Activated naive CD4-positive, alpha-beta T cell treated with anti-CD3 and anti-CD28 coated beads for 36 hours (primary cell): ENCODE measurements at regions of chr12 and their contacts with region 1.

Region 1: GRCh38 chr12:111396726-111397445 is 8.8 kb upstream of the SH2B3 start:
- DNase-seq: peak; percentile 88
- H3K4me3 Mint-ChIP-seq: peak overlapping the region; percentile 65
- H3K27ac Mint-ChIP-seq: no peak overlapping the region
- H3K4me1 Mint-ChIP-seq: peaks cover 36% of the 10 kb centered on the region
- H3K27me3 Mint-ChIP-seq: no peaks in the 10 kb centered on the region

Region 2: DNA sequence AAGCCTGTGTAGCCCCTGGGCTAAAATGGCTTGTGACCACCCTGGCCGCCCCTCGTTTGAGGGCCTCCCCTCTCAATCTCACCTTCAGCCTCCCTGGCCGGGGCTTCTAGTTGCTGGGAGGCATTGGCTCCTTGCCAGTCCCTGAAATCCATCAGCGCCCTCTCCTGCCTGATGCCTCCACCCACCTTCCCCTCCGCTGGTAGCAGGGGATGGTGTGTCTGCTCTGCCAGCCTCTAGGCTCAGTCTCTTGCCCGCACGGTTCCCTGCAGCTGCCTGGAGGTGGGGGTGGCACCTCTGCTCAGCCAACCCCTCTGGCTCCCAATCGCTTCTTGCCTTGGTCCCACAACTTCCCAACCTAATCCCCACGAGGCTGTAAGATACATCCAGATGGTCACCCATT is 195.8 kb before region 1 on chr12:
- CTCF ChIA-PET with region 1: no interaction called
- intact Hi-C with region 1: no loop called
- DNase-seq: no peak
- H3K4me3 Mint-ChIP-seq: no peak overlapping the region
- H3K27ac Mint-ChIP-seq: no peak overlapping the region
- H3K4me1 Mint-ChIP-seq: no peaks in the 10 kb centered on the region
- H3K27me3 Mint-ChIP-seq: peaks cover 13% of the 10 kb centered on the region

Region 3: DNA sequence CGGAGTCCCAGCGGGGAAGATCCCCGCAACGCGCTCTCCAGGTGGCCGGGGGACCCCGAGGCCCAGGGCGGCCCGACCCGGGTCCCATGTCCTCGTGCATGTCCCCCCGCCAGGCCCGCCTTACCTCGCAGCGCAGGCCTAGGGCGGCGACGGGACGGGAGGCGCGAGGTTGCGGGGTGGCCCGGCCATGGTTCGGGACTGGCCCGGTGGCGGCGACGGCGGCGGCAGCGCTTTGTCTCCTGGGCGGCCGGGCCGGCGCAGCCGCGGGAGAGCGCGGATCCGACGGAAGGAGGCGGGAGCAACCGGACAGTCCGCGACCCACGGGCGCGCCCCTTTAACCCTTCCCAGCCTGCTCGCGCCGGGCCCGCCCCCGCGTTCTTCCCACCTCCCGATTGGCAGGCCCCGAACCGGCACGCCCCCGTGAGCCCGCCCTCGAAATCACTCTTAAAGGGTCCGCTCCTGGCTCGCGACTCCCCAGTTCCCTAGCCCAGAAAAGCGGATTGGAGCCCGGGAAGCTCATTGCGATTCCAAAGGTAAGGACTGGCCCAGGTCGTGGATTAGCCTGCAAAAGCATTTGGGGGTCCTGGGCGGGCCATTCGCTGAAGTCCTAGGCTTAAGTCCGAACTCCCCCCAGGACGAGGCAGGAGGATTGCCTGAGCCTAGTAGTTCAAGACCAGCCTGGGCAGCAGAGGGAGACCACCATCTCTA is 27.9 kb before region 1 on chr12 and contains the start of gene PHETA1:
- CTCF ChIA-PET with region 1: interaction called, 10 read pairs
- intact Hi-C with region 1: no loop called
- DNase-seq: peak; percentile 81
- H3K4me3 Mint-ChIP-seq: peak within 1 kb of the TSS; percentile 73
- H3K27ac Mint-ChIP-seq: no peak within 1 kb of the TSS
- H3K4me1 Mint-ChIP-seq: peaks cover 14% of the 10 kb centered on the region
- H3K27me3 Mint-ChIP-seq: no peaks in the 10 kb centered on the region
- total RNA-seq, gene PHETA1: 0.35 to 1.0 TPM

Region 4: DNA sequence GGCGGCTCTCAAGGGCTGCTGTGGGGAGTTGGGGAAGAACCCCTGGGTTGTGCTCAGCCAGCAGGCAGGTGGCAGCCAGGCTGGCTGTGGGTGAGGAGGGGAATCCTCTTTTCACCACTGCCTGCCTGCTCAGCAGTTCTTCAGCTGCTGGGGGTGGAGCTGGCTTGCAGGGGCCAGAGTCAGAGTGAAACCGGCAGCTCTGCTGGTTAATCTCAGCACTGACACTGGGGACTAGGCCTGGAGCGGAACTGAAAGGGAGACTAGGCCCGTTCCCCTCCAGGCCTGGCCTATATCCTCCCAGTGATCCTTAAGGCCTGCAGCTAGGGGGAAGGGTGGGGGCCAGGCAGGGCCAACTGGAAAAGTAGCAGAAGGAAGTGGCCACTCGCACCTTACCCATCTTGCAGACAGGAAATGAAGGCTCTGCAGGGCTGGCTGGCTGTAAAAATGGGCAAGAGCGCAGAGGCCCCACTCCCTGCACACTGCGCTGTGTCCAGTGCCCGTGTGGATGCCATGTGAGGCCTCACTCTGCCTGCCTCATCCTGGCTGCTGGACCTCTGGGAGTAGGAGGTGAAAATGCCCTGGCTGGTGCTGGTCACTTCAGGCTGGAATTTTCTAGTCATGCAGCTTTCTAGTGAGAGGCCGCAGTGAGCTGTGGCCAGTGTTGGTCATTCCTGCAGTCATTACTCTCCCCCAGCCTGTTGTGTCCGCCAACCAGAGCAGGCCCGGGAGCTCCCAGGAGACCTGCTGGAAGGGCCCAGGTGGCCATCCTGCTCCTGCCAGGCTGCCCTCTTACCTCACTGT is 48.2 kb after region 1 on chr12:
- CTCF ChIA-PET with region 1: interaction called, 763 read pairs
- intact Hi-C with region 1: loop called (anchors 1 kb)
- DNase-seq: peak; percentile 97
- H3K4me3 Mint-ChIP-seq: no peak overlapping the region
- H3K27ac Mint-ChIP-seq: peak overlapping the region; percentile 67
- H3K4me1 Mint-ChIP-seq: peaks cover 67% of the 10 kb centered on the region
- H3K27me3 Mint-ChIP-seq: no peaks in the 10 kb centered on the region

Region 5: DNA sequence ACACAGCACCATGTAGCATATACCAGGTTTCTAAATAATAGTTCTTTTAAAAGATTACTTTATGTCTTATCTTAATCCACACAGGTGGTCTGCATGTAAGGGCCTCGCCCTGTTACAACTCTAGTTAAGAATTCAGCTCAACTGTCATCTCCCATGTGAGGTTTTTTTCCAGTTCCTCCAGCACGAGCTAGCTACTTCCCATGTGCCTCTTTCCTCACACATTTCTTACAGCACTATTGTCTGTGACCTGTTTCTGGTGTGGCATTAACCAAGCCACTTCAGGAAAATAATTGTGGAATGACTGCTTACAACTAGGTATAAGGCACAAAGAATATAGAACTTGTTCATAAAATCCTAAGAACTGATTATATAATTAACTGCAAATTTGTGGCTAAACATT is 74.3 kb after region 1 on chr12:
- CTCF ChIA-PET with region 1: interaction called, 17 read pairs
- intact Hi-C with region 1: no loop called
- DNase-seq: no peak
- H3K4me3 Mint-ChIP-seq: no peak overlapping the region
- H3K27ac Mint-ChIP-seq: no peak overlapping the region
- H3K4me1 Mint-ChIP-seq: peaks cover 7% of the 10 kb centered on the region
- H3K27me3 Mint-ChIP-seq: no peaks in the 10 kb centered on the region

Region 6: GRCh38 chr12:111673503-111673902 is 276.6 kb after region 1 on chr12:
- CTCF ChIA-PET with region 1: interaction called, 15 read pairs
- intact Hi-C with region 1: loop called (anchors 1 kb)
- DNase-seq: no peak
- H3K4me3 Mint-ChIP-seq: no peak overlapping the region
- H3K27ac Mint-ChIP-seq: no peak overlapping the region
- H3K4me1 Mint-ChIP-seq: no peaks in the 10 kb centered on the region
- H3K27me3 Mint-ChIP-seq: no peaks in the 10 kb centered on the region